ENCODE measurements at regions of chr5 and their contacts with region 1.

Region 1: GRCh38 chr5:143002459-143003328 is 232.5 kb downstream of the ARHGAP26 start:
- DNase-seq: peak; percentile 64
- CTCF ChIP-seq: peak; percentile 55

Region 2: GRCh38 chr5:142922223-142922952 is 80.3 kb before region 1 on chr5:
- CTCF ChIA-PET with region 1: interaction called, 12 read pairs
- POLR2A ChIA-PET with region 1: no interaction called
- DNase-seq: peak; percentile 49
- CTCF ChIP-seq: peak; percentile 44

Region 3: GRCh38 chr5:143014017-143014651 is 11.4 kb after region 1 on chr5:
- CTCF ChIA-PET with region 1: interaction called, 24 read pairs
- POLR2A ChIA-PET with region 1: no interaction called
- DNase-seq: no peak
- CTCF ChIP-seq: peak; percentile 33

Region 4: GRCh38 chr5:143019614-143020515 is 17.2 kb after region 1 on chr5:
- CTCF ChIA-PET with region 1: interaction called, 24 read pairs
- POLR2A ChIA-PET with region 1: interaction called, 4 read pairs
- DNase-seq: peak; percentile 79
- CTCF ChIP-seq: no peak

Region 5: DNA sequence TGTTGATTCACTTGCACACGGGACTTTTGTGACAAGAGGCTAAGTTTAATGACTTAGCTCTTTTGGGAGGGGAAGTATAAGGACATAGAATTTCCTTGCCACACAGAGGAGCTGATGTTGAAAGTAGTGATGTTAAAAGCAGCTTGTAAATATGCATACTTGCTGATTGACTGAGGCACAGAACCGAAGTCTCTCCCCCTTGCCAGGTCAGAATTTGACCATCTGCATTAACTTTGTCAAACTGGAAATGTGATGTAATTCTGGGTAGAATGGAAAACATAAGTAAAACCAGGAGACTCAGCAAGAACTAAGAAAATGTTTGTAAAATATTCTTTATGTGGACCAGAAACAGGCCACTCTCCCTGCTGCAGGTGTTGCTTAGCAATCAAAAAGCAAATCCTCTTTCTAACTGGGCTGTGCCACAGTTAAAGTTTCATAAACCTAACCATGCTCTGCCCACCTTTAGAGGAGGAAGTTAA is 116.6 kb after region 1 on chr5:
- CTCF ChIA-PET with region 1: interaction called, 11 read pairs
- POLR2A ChIA-PET with region 1: no interaction called
- DNase-seq: no peak
- CTCF ChIP-seq: no peak

Region 6: DNA sequence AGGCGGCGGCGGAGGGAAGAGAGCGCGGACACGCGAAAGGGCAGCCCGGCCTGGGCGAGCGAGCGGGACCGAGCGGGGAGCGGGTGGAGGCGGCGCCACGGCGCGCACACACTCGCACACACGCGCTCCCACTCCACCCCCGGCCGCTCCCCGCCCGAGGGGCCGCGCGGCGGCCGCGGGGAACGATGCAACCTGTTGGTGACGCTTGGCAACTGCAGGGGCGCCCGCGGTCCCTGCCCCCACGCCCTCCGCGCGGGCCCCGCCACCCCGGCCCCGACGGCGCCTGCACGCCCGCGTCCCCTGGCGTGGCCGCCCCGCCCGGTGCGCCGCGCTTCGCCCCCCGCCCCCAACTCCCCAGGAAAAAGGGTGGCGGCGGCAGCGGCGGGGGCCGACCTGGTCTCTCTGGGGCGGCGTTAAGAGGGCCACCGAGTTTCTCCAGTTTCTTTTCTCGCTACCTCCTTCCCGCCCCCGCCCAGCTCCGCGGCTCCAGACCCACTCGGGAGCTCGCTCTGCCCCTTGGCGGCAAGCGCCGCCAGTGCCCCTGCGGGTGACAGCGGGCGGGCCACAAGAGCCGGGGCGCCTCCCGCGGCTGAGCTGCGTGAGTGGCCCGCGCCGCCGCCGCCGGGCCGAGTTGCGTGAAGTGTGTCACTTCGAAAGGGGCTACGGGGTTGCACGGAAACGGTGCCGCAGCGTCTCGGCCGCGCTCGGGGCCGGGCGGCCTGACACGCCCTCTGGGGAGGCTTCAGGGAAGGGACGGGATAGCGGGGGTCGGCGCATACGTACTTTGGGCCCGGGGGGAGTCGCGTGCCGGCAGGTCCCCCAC is 401.1 kb after region 1 on chr5 and contains the start of gene NR3C1:
- CTCF ChIA-PET with region 1: interaction called, 20 read pairs
- POLR2A ChIA-PET with region 1: interaction called, 6 read pairs
- DNase-seq: peak; percentile 82
- CTCF ChIP-seq: peak; percentile 63